ENCODE measurements at regions of chr11 and their contacts with region 1.

Region 1: DNA sequence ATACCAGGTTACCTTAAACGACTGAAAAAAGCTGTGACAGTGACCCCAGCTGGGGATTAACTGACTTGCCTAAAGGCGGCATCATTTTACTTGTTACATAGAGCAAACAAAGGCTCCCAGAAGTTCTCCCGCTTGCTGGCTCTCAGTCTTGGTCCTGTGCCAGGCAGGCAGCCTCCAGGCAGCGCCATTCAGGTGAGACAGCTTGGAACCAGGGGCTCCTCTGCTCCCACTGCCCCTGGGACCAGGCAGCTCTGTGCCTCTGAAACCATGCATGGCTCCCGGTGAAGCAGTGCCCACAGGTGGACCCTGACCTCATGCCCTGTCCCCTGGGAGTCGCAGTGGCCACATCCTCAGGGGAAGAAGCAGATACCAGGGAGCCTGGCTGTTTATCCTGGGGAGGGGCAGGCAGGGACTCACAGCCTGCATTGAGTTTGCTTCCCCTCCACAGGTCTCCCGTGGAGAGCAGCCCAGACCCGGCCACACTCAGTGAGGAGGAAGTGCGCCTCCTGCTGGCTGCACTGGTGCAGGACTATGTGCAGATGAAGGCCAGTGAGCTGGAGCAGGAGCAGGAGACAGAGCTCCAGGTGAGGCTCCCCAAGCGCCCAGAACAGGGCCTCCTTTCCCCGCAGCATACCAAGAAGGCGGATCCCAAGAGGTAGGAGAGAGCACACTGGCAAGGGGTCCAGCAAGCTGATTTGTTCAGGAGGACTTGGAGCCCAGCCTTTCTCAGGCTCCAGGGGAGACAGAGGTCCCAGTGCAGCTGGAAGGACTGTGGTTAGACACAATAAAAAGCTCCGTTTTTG is 15.6 kb upstream of the CYP2R1 start:
- DNase-seq: peak; percentile 60
- H3K4me3 ChIP-seq: no peak overlapping the region
- H3K27ac ChIP-seq: no peak overlapping the region
- H3K4me1 ChIP-seq: peaks cover 4% of the 10 kb centered on the region
- H3K27me3 ChIP-seq: no peaks in the 10 kb centered on the region
- CTCF ChIP-seq: peak; percentile 40 to 76 (median 62)
- POLR2A ChIP-seq: no peak

Region 2: GRCh38 chr11:14537134-14537599 is 370.4 kb before region 1 on chr11:
- intact Hi-C with region 1: loop called (anchors 5 kb)
- DNase-seq: no peak
- H3K4me3 ChIP-seq: no peak overlapping the region
- H3K27ac ChIP-seq: no peak overlapping the region
- H3K4me1 ChIP-seq: no peaks in the 10 kb centered on the region
- H3K27me3 ChIP-seq: no peaks in the 10 kb centered on the region
- CTCF ChIP-seq: peak; percentile 39 to 73 (median 70)
- POLR2A ChIP-seq: no peak

Region 3: GRCh38 chr11:14789879-14790484 is 117.6 kb before region 1 on chr11:
- intact Hi-C with region 1: no loop called
- DNase-seq: no peak
- H3K4me3 ChIP-seq: no peak overlapping the region
- H3K27ac ChIP-seq: no peak overlapping the region
- H3K4me1 ChIP-seq: no peaks in the 10 kb centered on the region
- H3K27me3 ChIP-seq: no peaks in the 10 kb centered on the region
- CTCF ChIP-seq: peak in 3 of 4 experiments; percentile 19 to 54 (median 48)
- POLR2A ChIP-seq: no peak

Region 4: GRCh38 chr11:15074206-15075161 is 166.9 kb after region 1 on chr11:
- intact Hi-C with region 1: loop called (anchors 10 kb)
- DNase-seq: peak; percentile 77
- H3K4me3 ChIP-seq: peak overlapping the region in 1 of 2 donors; percentile 17
- H3K27ac ChIP-seq: no peak overlapping the region
- H3K4me1 ChIP-seq: no peaks in the 10 kb centered on the region
- H3K27me3 ChIP-seq: no peaks in the 10 kb centered on the region
- CTCF ChIP-seq: peak; percentile 56 to 68 (median 65)
- POLR2A ChIP-seq: no peak

Region 5: GRCh38 chr11:15208378-15209222 is 301.0 kb after region 1 on chr11:
- intact Hi-C with region 1: loop called (anchors 2 kb)
- DNase-seq: peak; percentile 58
- H3K4me3 ChIP-seq: no peak overlapping the region
- H3K27ac ChIP-seq: no peak overlapping the region
- H3K4me1 ChIP-seq: no peaks in the 10 kb centered on the region
- H3K27me3 ChIP-seq: no peaks in the 10 kb centered on the region
- CTCF ChIP-seq: peak; percentile 85 to 91 (median 90)
- POLR2A ChIP-seq: no peak

Measured in prostate gland (tissue), 2 donors.